ENCODE measurements at regions of chr5 and their contacts with region 1.

Region 1: DNA sequence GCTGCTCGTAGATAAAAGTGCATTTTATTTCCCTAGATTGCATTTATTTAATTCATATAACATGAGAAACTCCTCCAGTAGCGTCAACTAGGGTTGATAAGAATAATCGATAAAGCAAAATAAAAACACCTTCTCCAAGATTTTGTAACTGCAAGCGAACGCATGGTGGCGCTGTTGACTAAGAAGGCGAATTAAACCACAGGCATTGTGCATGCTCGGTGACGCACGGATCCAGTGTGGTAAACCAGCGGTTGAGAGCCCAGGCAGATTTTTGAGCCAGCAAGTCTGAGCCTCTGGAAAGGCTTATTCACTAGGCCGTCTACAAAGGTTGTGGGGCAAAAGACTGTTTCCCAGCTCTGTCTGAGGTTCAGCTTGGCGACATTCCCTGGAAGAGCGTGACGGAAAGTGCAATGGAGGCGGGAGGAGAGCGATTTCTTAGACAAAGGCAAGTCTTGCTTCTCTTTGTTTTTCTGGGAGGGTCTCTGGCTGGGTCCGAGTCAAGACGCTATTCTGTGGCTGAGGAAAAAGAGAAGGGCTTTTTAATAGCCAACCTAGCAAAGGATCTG is at the start of gene PCDHB3:
- DNase-seq: no peak
- ATAC-seq: no peak
- H3K4me3 Mint-ChIP-seq: no peak within 1 kb of the TSS
- H3K27ac Mint-ChIP-seq: no peak within 1 kb of the TSS
- H3K4me1 Mint-ChIP-seq: no peaks in the 10 kb centered on the region
- H3K27me3 Mint-ChIP-seq: peaks cover 21% of the 10 kb centered on the region
- CTCF ChIP-seq: no peak
- total RNA-seq, gene PCDHB3: 0.07 TPM in 1 of 2 replicates, not detected in the other

Region 2: DNA sequence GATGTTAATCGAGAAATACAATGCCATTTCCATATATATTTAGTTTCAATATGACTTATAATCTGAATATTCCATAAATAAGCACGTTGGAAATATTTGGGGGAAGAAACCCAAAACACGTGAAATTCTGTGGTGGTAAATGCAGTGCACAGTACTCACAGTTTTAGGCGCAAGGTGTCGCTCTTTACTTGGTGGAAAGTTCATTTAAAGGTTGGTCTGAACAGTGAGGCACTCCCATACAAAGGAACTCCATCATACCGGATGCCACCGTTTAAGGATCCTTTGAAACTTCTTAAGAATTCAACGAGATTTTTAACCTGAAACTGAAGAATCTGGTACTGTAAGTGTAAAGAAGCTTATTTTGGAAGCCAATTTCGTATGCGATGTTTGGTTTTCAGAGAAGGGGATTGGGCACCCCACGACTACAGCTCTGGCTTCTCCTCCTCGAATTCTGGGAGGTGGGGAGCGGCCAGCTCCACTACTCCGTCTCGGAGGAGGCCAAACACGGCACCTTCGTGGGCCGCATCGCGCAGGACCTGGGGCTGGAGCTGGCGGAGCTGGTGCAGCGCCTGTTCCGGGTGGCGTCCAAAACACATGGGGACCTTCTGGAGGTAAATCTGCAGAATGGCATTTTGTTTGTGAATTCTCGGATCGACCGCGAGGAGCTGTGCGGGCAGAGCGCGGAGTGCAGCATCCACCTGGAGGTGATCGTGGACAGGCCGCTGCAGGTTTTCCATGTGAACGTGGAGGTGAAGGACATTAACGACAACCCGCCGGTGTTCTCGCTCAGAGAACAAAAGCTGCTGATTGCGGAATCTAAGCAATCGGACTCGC is 231.4 kb before region 1 on chr5 and contains the start of gene PCDHA11:
- CTCF ChIA-PET with region 1: no interaction called
- POLR2A ChIA-PET with region 1: no interaction called
- intact Hi-C with region 1: loop called (anchors 10 kb)
- DNase-seq: no peak
- ATAC-seq: no peak
- H3K4me3 Mint-ChIP-seq: no peak within 1 kb of the TSS
- H3K27ac Mint-ChIP-seq: no peak within 1 kb of the TSS
- H3K4me1 Mint-ChIP-seq: no peaks in the 10 kb centered on the region
- H3K27me3 Mint-ChIP-seq: peaks cover 5% of the 10 kb centered on the region
- CTCF ChIP-seq: no peak
- total RNA-seq, gene PCDHA11: not detected in 2 replicates

Region 3: GRCh38 chr5:141172378-141173204 is 72.3 kb after region 1 on chr5 and contains the start of gene PCDHB7:
- CTCF ChIA-PET with region 1: no interaction called
- POLR2A ChIA-PET with region 1: no interaction called
- intact Hi-C with region 1: no loop called
- DNase-seq: no peak
- ATAC-seq: no peak
- H3K4me3 Mint-ChIP-seq: no peak within 1 kb of the TSS
- H3K27ac Mint-ChIP-seq: no peak within 1 kb of the TSS
- H3K4me1 Mint-ChIP-seq: peaks cover 5% of the 10 kb centered on the region
- H3K27me3 Mint-ChIP-seq: peaks cover 13% of the 10 kb centered on the region
- CTCF ChIP-seq: no peak
- total RNA-seq, gene PCDHB7: not detected in 2 replicates

Region 4: GRCh38 chr5:141713616-141714309 is 613.4 kb after region 1 on chr5:
- CTCF ChIA-PET with region 1: no interaction called
- POLR2A ChIA-PET with region 1: no interaction called
- intact Hi-C with region 1: no loop called
- DNase-seq: no peak
- ATAC-seq: no peak
- H3K4me3 Mint-ChIP-seq: no peak overlapping the region
- H3K27ac Mint-ChIP-seq: no peak overlapping the region
- H3K4me1 Mint-ChIP-seq: no peaks in the 10 kb centered on the region
- H3K27me3 Mint-ChIP-seq: peaks cover 18% of the 10 kb centered on the region
- CTCF ChIP-seq: no peak